Endothelial cell of umbilical vein (primary cell): ENCODE measurements at regions of chr17 and their contacts with region 1.

Region 1: GRCh38 chr17:75632863-75633485 is at the start of gene SMIM5:
- DNase-seq: peak; percentile 71
- H3K4me3 ChIP-seq: no peak within 1 kb of the TSS
- H3K27ac ChIP-seq: peak within 1 kb of the TSS; percentile 29
- H3K4me1 ChIP-seq: peaks cover 12% of the 10 kb centered on the region
- H3K27me3 ChIP-seq: no peaks in the 10 kb centered on the region
- CTCF ChIP-seq: peak; percentile 92 to 97
- POLR2A ChIP-seq: no peak
- total RNA-seq, gene SMIM5: not detected in 2 replicates

Region 2: GRCh38 chr17:75614006-75614405 is 19.0 kb before region 1 on chr17:
- CTCF ChIA-PET with region 1: interaction called, 65 read pairs
- POLR2A ChIA-PET with region 1: no interaction called
- dilution Hi-C with region 1: no loop called
- intact Hi-C with region 1: no loop called
- DNase-seq: no peak
- H3K4me3 ChIP-seq: no peak overlapping the region
- H3K27ac ChIP-seq: no peak overlapping the region
- H3K4me1 ChIP-seq: no peaks in the 10 kb centered on the region
- H3K27me3 ChIP-seq: no peaks in the 10 kb centered on the region
- CTCF ChIP-seq: peak in 1 of 2 donors; percentile 9
- POLR2A ChIP-seq: no peak

Region 3: DNA sequence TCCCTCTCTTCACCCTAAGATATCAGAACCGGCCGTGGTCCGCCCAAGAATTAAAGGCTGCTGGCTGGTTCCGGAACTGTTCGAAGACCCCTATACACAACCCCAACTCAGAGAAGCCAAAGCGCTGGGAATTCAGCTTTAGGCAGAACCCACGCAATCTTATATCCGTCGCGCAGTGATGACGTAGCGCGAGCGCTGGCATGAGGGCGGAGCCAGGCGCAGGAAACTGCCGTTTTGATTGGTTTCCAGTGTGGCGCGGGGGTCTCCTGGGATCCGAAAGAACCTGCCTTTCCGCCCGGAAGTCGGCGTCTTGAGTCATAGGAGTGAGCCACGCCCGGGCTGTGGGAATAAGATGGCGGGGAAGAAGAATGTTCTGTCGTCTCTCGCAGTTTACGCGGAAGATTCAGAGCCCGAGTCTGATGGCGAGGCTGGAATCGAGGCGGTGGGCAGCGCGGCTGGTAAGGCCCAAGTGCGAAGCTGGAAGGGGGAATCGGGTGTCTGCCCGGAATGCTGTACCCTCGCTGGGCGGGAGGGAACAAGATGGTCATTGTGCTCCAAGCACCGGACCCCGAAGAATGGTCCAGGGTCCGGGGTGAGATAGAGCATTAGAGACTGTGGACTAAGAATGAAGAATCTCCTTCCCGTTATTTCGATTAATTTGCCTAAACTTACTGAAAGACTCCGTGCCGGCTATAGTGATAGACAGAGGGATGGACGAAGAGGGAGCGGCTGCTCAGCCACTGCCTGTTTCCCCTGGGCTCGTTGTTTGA is 34.2 kb after region 1 on chr17 and contains the starts of genes RECQL5 and SAP30BP:
- CTCF ChIA-PET with region 1: interaction called, 29 read pairs
- POLR2A ChIA-PET with region 1: no interaction called
- dilution Hi-C with region 1: no loop called
- intact Hi-C with region 1: no loop called
- DNase-seq: peak; percentile 98
- H3K4me3 ChIP-seq: peak within 1 kb of the TSS; percentile 77 to 95 (median 81)
- H3K27ac ChIP-seq: peak within 1 kb of the TSS; percentile 86
- H3K4me1 ChIP-seq: peaks cover 20% of the 10 kb centered on the region
- H3K27me3 ChIP-seq: no peaks in the 10 kb centered on the region
- CTCF ChIP-seq: no peak
- POLR2A ChIP-seq: peak; percentile 31
- total RNA-seq, gene RECQL5: 30.7 and 30.9 TPM in 2 replicates
- total RNA-seq, gene SAP30BP: 143 and 151 TPM in 2 replicates

Region 4: GRCh38 chr17:75688209-75688825 is 55.3 kb after region 1 on chr17:
- CTCF ChIA-PET with region 1: interaction called, 18 read pairs
- POLR2A ChIA-PET with region 1: no interaction called
- dilution Hi-C with region 1: no loop called
- intact Hi-C with region 1: no loop called
- DNase-seq: peak; percentile 85
- H3K4me3 ChIP-seq: peak overlapping the region in 1 of 3 experiments; percentile 1
- H3K27ac ChIP-seq: peak overlapping the region; percentile 81
- H3K4me1 ChIP-seq: peaks cover 92% of the 10 kb centered on the region
- H3K27me3 ChIP-seq: no peaks in the 10 kb centered on the region
- CTCF ChIP-seq: no peak
- POLR2A ChIP-seq: peak; percentile 72

Region 5: DNA sequence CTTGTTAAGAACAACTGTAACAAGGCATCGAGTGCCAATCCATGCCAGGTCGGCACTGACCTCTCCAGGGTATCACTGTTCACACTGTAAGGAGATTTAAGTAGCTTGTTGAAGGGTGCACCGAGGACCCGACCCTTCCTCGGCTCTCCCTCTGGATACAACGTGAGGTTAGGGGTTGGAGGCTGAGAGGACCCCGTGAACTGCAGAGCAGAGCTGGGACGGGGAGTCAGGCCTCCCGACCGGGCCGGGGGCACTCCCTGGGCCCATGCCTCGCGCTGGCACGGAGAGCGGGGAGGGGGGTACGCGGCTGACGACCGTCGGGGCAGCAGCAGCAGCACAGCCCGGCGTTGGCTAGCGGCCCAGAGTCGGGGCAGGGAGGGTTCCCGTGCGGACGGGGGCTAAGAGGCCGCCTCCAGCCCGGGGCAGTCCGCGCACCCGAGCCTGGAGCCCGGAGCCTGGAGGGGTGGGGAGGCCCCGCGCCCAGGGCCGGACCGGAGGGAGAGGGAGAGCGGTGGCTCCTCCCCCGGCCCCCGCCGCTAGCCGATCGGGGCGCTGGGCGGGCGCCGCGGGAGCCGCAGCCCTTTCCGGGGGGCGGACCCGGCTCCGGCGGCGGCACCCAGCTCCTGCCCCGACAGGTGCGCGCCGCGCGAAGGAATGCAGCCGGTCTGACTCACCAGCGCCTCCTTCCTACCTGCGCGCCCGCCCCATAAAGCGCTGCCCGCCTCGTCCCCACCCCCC is 87.9 kb after region 1 on chr17 and contains the start of gene ITGB4:
- CTCF ChIA-PET with region 1: interaction called, 24 read pairs
- POLR2A ChIA-PET with region 1: no interaction called
- dilution Hi-C with region 1: no loop called
- intact Hi-C with region 1: no loop called
- DNase-seq: peak; percentile 30
- H3K4me3 ChIP-seq: peak within 1 kb of the TSS in 2 of 3 experiments; percentile 6 to 33
- H3K27ac ChIP-seq: no peak within 1 kb of the TSS
- H3K4me1 ChIP-seq: peaks cover 2% of the 10 kb centered on the region
- H3K27me3 ChIP-seq: peaks cover 6 to 11% of the 10 kb centered on the region in 2 experiments
- CTCF ChIP-seq: no peak
- POLR2A ChIP-seq: no peak
- total RNA-seq, gene ITGB4: 4.1 and 4.2 TPM in 2 replicates

Region 6: DNA sequence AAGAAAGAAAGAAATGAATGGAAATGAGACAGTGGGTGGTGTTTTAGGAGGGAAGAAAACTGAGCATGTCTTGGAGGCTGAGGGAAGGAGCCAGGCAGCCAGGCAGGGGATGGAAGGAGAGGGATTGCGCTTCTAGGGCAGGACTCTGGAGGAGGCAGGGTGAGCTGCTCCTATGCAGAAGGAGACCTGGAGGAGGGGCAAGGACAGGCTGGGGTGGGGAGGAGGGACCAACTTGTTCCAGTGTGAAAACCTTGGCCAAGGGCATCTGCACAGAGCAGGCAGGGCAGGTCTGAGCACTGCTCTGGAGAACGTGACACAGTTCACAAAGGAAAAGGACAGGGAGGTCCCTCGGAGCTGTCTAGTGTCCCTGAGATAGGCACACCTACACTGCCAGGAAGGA is 126.5 kb after region 1 on chr17:
- CTCF ChIA-PET with region 1: interaction called, 12 read pairs
- POLR2A ChIA-PET with region 1: no interaction called
- dilution Hi-C with region 1: no loop called
- intact Hi-C with region 1: no loop called
- DNase-seq: no peak
- H3K4me3 ChIP-seq: no peak overlapping the region
- H3K27ac ChIP-seq: no peak overlapping the region
- H3K4me1 ChIP-seq: peaks cover 11% of the 10 kb centered on the region
- H3K27me3 ChIP-seq: no peaks in the 10 kb centered on the region
- CTCF ChIP-seq: no peak
- POLR2A ChIP-seq: no peak